B cell (primary cell): ENCODE measurements at regions of chr9 and their contacts with region 1.

Region 1: GRCh38 chr9:2857564-2858198 is 13.8 kb upstream of the PUM3 start:
- DNase-seq: peak; percentile 71
- ATAC-seq: peak; percentile 73
- H3K4me3 ChIP-seq: no peak overlapping the region
- H3K4me3 Mint-ChIP-seq: no peak overlapping the region
- H3K27ac ChIP-seq: no peak overlapping the region
- H3K27ac Mint-ChIP-seq: no peak overlapping the region
- H3K4me1 ChIP-seq: no peaks in the 10 kb centered on the region
- H3K4me1 Mint-ChIP-seq: peaks cover 6% of the 10 kb centered on the region
- H3K27me3 ChIP-seq: peaks cover 0 to 3% (median 0%) of the 10 kb centered on the region in 4 experiments
- H3K27me3 Mint-ChIP-seq: peaks cover 35% of the 10 kb centered on the region
- CTCF ChIP-seq: peak; percentile 93

Region 2: GRCh38 chr9:2846115-2846514 is 11.6 kb before region 1 on chr9:
- CTCF ChIA-PET with region 1: interaction called, 38 read pairs
- POLR2A ChIA-PET with region 1: no interaction called
- intact Hi-C with region 1: no loop called
- DNase-seq: no peak
- ATAC-seq: no peak
- H3K4me3 ChIP-seq: no peak overlapping the region
- H3K4me3 Mint-ChIP-seq: no peak overlapping the region
- H3K27ac ChIP-seq: no peak overlapping the region
- H3K27ac Mint-ChIP-seq: no peak overlapping the region
- H3K4me1 ChIP-seq: peaks cover 24 to 25% of the 10 kb centered on the region in 2 donors
- H3K4me1 Mint-ChIP-seq: peaks cover 10% of the 10 kb centered on the region
- H3K27me3 ChIP-seq: no peaks in the 10 kb centered on the region
- H3K27me3 Mint-ChIP-seq: no peaks in the 10 kb centered on the region
- CTCF ChIP-seq: no peak

Region 3: DNA sequence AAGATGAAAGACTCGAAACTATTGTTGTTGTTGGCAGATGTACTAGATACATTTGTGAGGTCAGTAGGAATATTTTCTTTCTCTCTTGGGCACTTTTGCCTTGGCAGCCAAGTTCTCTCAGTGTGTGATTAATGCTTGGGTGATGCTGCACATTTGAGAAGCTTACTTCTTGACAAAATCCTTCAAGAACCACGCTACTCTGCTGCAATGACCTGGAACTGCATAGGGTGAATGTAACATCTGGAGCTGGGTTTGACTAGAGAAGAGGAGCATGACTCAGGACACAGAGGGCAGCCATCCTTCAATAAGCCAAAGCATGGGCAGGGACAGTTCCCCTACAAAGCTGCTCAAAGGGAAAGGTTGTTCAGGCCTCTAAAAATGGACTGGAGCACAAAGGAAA is 61.7 kb after region 1 on chr9:
- CTCF ChIA-PET with region 1: no interaction called
- POLR2A ChIA-PET with region 1: no interaction called
- intact Hi-C with region 1: no loop called
- DNase-seq: no peak
- ATAC-seq: no peak
- H3K4me3 ChIP-seq: no peak overlapping the region
- H3K4me3 Mint-ChIP-seq: no peak overlapping the region
- H3K27ac ChIP-seq: no peak overlapping the region
- H3K27ac Mint-ChIP-seq: no peak overlapping the region
- H3K4me1 ChIP-seq: no peaks in the 10 kb centered on the region
- H3K4me1 Mint-ChIP-seq: no peaks in the 10 kb centered on the region
- H3K27me3 ChIP-seq: peaks cover 0 to 6% (median 0%) of the 10 kb centered on the region in 4 experiments
- H3K27me3 Mint-ChIP-seq: peaks cover 3% of the 10 kb centered on the region
- CTCF ChIP-seq: no peak

Region 4: GRCh38 chr9:4339357-4339756 is 1481.7 kb after region 1 on chr9:
- CTCF ChIA-PET with region 1: interaction called, 14 read pairs
- POLR2A ChIA-PET with region 1: no interaction called
- intact Hi-C with region 1: no loop called
- DNase-seq: peak; percentile 58
- ATAC-seq: peak; percentile 39
- H3K4me3 ChIP-seq: no peak overlapping the region
- H3K4me3 Mint-ChIP-seq: no peak overlapping the region
- H3K27ac ChIP-seq: no peak overlapping the region
- H3K27ac Mint-ChIP-seq: no peak overlapping the region
- H3K4me1 ChIP-seq: peaks cover 0 to 2% of the 10 kb centered on the region in 2 donors
- H3K4me1 Mint-ChIP-seq: peaks cover 3% of the 10 kb centered on the region
- H3K27me3 ChIP-seq: no peaks in the 10 kb centered on the region
- H3K27me3 Mint-ChIP-seq: peaks cover 33% of the 10 kb centered on the region
- CTCF ChIP-seq: peak; percentile 74

Region 5: GRCh38 chr9:4366591-4367330 is 1509.1 kb after region 1 on chr9:
- CTCF ChIA-PET with region 1: interaction called, 22 read pairs
- POLR2A ChIA-PET with region 1: no interaction called
- intact Hi-C with region 1: no loop called
- DNase-seq: peak; percentile 38
- ATAC-seq: no peak
- H3K4me3 ChIP-seq: no peak overlapping the region
- H3K4me3 Mint-ChIP-seq: no peak overlapping the region
- H3K27ac ChIP-seq: no peak overlapping the region
- H3K27ac Mint-ChIP-seq: no peak overlapping the region
- H3K4me1 ChIP-seq: no peaks in the 10 kb centered on the region
- H3K4me1 Mint-ChIP-seq: no peaks in the 10 kb centered on the region
- H3K27me3 ChIP-seq: no peaks in the 10 kb centered on the region
- H3K27me3 Mint-ChIP-seq: peaks cover 7% of the 10 kb centered on the region
- CTCF ChIP-seq: peak; percentile 76

Region 6: GRCh38 chr9:4375424-4376200 is 1517.9 kb after region 1 on chr9:
- CTCF ChIA-PET with region 1: interaction called, 3 read pairs
- POLR2A ChIA-PET with region 1: no interaction called
- intact Hi-C with region 1: loop called (anchors 2 kb)
- DNase-seq: no peak
- ATAC-seq: no peak
- H3K4me3 ChIP-seq: no peak overlapping the region
- H3K4me3 Mint-ChIP-seq: no peak overlapping the region
- H3K27ac ChIP-seq: no peak overlapping the region
- H3K27ac Mint-ChIP-seq: no peak overlapping the region
- H3K4me1 ChIP-seq: no peaks in the 10 kb centered on the region
- H3K4me1 Mint-ChIP-seq: no peaks in the 10 kb centered on the region
- H3K27me3 ChIP-seq: peaks cover 0 to 4% (median 0%) of the 10 kb centered on the region in 4 experiments
- H3K27me3 Mint-ChIP-seq: peaks cover 15% of the 10 kb centered on the region
- CTCF ChIP-seq: no peak